ENCODE measurements at regions of chr15 and their contacts with region 1.

Region 1: GRCh38 chr15:29805043-29805707 is 17.1 kb downstream of the TJP1 start:
- DNase-seq: peak in 2 of 5 donors; percentile 31 to 51
- ATAC-seq: peak; percentile 52 to 87 (median 80)
- H3K4me3 ChIP-seq: peak overlapping the region in 1 of 12 donors; percentile 4
- H3K27ac ChIP-seq: peak overlapping the region in 9 of 12 donors; percentile 22 to 51 (median 34)
- H3K4me1 ChIP-seq: peaks cover 11 to 88% (median 66%) of the 10 kb centered on the region in 12 donors
- H3K27me3 ChIP-seq: no peaks in the 10 kb centered on the region
- CTCF ChIP-seq: no peak
- POLR2A ChIP-seq: no peak

Region 2: DNA sequence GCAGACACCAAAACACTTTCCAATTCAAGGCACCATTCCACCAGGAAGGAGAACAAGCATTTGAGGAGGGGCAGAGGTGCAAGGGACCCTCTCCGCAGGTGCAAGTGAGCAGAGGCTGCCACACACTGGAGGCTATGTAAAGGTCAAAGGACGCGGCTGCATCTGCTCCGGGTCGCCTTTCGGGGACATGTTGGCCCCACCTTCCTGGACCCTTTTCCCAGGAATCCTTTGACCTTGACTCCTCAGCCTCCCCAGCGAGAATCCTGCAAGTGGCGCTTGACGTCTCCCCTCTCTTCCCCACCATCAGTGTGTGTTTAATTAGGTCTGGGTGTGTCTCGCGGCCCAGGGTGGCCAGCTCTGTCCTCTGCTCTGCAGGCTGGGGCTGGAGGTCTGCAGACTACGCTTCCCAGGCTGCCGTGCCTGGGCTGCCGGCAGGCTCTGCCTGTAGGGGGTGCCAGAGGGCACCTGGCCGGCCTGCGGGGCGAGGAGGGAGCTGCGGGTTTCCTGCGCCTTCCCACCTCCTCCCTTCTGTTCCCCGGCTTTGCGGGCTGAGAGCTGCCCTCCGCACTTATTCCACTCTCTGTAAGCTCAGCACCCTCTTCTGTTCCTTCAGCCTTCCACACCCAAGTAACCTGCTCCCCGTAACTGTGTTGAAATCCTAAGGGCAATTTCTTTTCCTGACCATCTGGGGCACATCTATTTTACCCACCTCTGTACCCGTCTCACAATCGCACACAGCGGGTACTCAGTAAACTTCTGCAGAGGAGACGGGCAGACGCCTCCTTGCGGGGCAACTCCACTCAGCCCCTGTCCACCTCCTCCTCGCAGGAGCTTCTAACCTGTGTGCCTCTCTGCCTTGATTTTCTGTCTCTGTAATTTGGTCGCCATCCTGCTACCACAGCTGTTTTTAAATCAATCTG is 665.4 kb before region 1 on chr15:
- intact Hi-C with region 1: no loop called
- DNase-seq: peak in 1 of 5 donors; percentile 45
- ATAC-seq: peak in 3 of 4 donors; percentile 67 to 92 (median 79)
- H3K4me3 ChIP-seq: no peak overlapping the region
- H3K27ac ChIP-seq: no peak overlapping the region
- H3K4me1 ChIP-seq: peaks cover 0 to 7% (median 0%) of the 10 kb centered on the region in 12 donors
- H3K27me3 ChIP-seq: peaks cover 0 to 36% (median 15%) of the 10 kb centered on the region in 9 donors
- CTCF ChIP-seq: peak; percentile 52 to 84 (median 71)
- POLR2A ChIP-seq: no peak

Region 3: DNA sequence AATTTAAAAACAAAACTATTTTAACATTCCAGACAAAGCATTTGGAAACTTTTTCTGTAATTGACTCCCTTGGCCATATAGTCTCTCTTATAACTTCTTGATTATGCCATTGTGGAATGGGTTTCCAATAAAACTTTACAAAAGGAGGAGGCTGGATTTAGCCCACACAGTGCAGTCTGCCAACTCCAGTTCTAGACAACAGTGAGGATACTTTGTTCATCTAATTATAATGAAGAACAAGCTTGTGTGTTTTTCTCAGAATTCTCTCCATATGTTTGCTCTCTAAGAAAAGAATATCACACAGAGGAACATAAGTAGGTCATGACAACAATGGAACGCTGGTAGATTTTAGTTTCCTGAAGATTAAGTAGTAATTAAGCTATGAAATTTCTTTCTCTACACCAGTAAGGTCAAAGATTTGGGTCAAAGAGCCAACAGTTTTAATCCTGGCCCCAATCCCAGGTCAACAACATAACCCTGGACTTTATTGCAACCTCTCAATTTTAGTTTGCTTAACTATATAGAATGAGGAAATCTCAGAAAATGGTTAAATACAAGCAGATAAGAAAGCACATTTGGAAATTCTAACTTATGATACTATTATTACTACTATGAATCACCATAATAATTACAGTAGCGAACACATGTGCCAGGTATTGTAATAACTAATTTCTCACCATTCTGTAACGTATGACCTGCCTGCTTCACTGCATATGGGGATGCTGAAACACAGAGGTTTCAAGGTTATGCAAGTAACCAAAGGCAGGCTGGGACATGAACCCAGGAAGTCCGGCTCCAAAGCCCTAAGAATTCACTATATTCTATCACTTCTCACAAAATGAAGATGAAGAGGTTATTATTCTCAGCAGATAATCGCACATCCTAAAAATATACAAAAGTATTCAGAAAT is 48.6 kb before region 1 on chr15:
- intact Hi-C with region 1: loop called in 5 of 10 experiments (anchors 5 to 10 kb)
- DNase-seq: no peak
- ATAC-seq: peak in 3 of 4 donors; percentile 44 to 49 (median 45)
- H3K4me3 ChIP-seq: no peak overlapping the region
- H3K27ac ChIP-seq: peak overlapping the region in 5 of 12 donors; percentile 0 to 45 (median 11)
- H3K4me1 ChIP-seq: peaks cover 10 to 46% (median 27%) of the 10 kb centered on the region in 12 donors
- H3K27me3 ChIP-seq: no peaks in the 10 kb centered on the region
- CTCF ChIP-seq: no peak
- POLR2A ChIP-seq: no peak

Region 4: DNA sequence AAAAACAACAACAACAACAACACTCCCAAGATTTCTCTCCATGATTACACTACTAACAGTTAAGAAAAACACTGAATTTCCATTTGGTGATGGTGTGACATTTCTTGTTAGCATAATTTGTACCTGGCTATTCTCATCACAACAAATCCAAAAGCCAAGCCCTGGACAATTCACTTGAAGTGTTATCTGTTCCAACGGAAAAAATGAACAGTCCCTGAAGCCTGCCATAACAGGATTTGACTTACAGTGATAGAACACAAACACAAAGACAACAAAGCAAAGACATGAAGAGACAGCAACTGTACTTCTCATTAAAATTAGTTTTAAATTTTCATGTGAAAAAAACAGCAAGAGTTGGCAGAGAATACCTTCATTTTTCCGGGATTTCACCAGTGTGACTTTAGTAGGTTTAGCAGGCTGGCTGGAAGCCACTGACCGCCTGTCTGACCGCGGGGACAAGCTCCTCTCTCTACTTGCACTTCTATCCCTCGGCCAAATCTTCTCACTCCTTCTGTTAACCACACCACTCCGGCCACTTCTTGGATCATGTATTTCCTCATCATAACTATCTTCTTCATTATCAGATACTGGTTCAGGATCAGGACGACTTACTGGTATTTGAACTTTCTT is 39.2 kb before region 1 on chr15:
- intact Hi-C with region 1: loop called in 4 of 10 experiments (anchors 5 to 10 kb)
- DNase-seq: peak in 3 of 5 donors; percentile 25 to 34 (median 25)
- ATAC-seq: peak; percentile 33 to 86 (median 61)
- H3K4me3 ChIP-seq: no peak overlapping the region
- H3K27ac ChIP-seq: peak overlapping the region in 4 of 12 donors; percentile 13 to 42 (median 32)
- H3K4me1 ChIP-seq: peaks cover 0 to 38% (median 27%) of the 10 kb centered on the region in 12 donors
- H3K27me3 ChIP-seq: no peaks in the 10 kb centered on the region
- CTCF ChIP-seq: no peak
- POLR2A ChIP-seq: no peak